Astrocyte of the cerebellum (primary cell): ENCODE measurements at regions of chr22 and their contacts with region 1.

Region 1: DNA sequence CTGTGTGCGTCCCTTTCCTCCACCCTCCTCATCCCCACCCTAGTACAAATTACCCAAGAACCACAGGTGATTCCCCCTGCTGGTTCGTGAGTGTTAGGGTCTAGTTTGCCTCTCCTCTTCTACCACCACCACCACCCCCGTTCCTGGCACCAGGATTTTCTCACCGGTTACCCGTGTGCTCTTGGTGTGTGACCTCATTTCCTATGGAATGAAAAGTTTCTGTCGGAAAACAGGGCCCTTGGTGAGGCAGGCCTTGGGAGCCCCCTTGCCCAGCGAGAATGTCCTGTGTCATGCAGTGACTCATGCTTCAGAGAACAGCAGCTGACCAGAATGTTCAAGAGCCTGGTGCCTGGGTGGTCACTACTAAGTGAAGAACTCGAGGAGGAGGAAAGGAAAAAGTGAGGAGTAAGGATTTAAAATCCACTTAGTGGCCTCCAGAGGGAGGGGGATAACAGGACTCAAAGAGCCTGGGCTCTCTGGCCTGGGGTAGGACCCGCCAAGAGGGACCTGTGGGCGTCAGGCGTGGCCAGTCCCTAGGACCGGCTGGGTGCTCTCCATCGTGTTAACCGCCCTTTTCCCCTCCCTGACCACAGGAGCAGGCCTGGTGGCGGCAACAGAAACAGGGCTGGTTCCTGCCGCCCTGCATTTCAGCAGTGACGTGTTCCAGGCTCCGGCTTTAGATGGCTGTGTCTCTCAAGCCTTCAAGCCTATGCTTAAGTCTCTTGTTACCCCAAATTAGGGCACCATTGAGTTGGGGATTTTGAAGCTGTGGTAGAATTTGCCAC is 30.2 kb downstream of the C22orf31 start:
- DNase-seq: peak; percentile 95
- H3K4me3 ChIP-seq: peak overlapping the region; percentile 32
- CTCF ChIP-seq: peak; percentile 19

Region 2: DNA sequence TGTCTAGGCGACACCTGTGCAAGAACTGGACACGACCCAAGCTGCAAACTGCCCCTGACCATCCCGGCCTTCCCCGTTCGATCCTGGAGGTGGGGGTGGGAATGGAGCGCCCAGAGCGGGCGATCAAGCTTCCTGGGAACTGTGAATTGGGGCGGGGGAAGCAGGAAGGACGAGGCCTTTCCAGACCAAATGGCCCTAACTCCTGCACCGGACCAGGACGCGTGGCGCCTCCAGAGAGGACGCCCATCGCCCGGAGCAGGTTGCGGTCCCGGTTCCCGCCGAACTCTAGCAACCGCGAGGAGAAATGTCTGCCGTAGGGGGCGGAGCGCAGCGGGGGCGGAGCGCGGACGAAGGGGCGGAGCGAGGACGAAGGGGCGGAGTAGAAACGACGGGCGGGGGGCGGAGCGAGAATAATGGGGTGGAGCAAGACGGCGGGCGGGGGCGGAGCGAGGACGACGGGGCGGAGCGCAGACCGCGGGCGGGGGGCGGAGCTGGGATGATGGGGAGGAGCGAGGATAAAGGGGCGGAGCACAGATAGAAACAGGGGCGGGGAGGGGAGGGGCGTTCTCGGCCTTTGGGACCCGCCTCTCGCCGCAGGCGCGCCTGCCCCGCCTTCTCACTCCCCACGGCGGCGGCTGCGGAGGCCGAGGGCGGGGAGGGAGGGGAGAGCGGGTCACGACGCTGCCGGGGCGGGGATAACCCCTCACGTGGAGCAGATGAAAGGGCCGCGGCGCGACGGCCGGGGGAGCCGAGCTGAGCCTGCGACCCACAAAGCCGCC is 148.4 kb before region 1 on chr22 and contains the start of gene ZNRF3:
- in situ Hi-C with region 1: loop called (anchors 10 kb)
- DNase-seq: peak; percentile 78
- H3K4me3 ChIP-seq: peak within 1 kb of the TSS; percentile 64
- CTCF ChIP-seq: no peak

Region 3: DNA sequence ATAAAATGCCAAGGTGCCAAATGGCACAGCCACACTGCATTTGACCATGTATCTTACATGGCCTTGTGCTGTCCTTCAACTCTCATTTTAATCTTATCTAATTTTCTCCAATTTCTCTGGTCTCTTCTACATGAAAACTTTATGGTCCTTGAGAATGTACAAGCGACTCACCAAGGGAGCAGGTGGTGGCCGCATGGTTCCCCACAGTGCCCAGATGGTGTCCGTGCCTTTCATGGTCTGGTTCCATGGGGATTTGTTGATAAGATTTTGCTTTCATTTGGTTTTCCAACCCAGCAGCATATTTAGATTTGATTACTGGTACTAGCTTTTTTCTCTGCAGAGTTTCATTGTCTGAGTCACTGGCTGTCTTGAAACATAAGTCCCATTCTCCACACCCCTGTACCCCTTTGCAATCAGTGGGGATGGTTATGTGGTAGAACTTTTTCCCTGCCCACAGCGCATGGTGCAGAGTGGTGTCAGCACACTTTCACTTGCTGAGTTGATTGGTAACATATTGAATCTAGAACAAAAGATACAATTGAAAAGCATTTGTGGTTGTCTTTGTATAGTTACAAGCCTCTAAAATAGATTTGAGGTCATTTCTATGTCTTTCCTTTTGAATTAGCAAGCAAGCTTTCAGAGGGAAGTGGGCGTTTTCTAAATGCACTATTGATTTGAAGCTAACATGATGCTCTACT is 124.0 kb before region 1 on chr22:
- in situ Hi-C with region 1: no loop called
- DNase-seq: no peak
- H3K4me3 ChIP-seq: no peak overlapping the region
- CTCF ChIP-seq: no peak

Region 4: DNA sequence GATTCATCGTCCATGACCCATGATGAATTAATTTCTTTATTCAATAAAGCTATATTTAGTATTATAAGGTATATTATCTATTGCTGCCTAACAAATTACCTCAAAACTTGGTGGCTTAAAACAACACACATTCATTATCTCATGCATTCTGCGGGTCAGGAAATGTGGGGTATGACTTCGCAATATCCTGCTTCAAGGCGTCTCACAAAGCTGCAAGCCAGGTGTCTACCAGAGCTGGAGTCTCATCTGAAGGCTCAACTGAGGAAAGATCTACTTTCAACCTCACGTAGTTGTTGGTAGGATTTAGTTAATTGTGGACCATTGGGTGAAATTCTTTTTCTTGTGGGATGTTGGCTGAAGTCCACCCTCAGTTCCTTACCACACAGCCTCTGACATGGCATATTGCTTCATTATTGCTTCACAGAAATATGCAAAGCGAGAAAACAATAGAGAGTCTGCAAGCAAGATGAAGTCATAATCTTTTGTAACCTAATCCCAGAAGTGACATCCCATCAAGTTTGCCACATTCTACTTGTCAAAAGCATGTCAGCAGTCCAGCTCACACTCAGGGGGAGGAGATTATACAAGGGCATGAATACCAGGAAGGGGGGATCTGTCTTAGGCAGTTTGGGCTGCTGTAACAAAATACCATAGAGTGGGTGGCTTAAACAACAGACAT is 86.5 kb after region 1 on chr22:
- in situ Hi-C with region 1: no loop called
- DNase-seq: no peak
- H3K4me3 ChIP-seq: no peak overlapping the region
- CTCF ChIP-seq: no peak